MCF 10A (cell line): ENCODE measurements at regions of chr5 and their contacts with region 1.

Region 1: DNA sequence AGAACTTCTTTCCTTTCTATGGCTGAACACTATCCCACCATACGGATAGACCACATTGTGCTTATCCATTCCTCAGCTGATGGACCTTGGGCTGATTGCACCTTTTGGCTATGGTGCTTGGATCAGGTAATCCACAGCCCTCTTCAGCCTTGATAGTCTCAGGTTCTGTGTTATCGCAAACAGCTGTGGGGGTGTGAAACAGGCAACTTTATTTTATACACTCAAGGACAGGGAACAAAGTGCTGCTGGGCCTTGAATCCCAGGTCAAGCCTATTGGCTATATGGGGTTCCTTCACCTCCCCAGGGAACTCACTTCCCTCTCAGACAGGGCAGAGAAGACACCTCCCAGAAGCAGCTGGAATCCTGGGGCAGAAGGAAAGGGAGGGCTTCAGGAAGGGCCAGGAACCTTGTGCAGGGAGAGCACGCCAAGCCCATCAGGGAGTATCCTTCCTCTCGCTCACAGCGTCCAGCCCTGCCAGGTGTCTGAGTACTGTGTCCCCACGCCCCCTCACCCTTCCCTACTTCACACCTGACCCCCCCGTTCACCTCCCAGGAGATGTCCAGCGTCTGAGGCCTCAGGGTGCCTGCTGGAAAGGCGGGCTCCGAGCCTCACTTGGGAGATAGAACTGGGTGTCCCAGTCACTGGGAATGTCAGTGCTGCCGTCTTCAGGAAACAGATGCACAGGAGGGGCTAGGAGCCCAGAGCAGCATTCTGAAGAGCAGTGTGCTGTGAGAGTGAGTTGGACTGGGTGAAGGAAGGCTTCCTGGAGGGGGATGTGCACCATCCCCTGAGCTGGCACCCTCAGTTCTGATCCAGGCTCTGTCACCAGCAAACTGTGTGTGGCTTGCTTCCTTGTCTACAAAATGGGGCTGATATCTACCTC is 32.8 kb downstream of the AFAP1L1 start:
- DNase-seq: no peak
- H3K4me3 Mint-ChIP-seq: no peak overlapping the region
- H3K27ac Mint-ChIP-seq: no peak overlapping the region
- H3K4me1 Mint-ChIP-seq: no peaks in the 10 kb centered on the region
- H3K27me3 Mint-ChIP-seq: no peaks in the 10 kb centered on the region
- CTCF ChIP-seq: no peak

Region 2: GRCh38 chr5:149181732-149182131 is 122.7 kb before region 1 on chr5:
- CTCF ChIA-PET with region 1: no interaction called
- POLR2A ChIA-PET with region 1: no interaction called
- intact Hi-C with region 1: no loop called
- DNase-seq: no peak
- H3K4me3 Mint-ChIP-seq: no peak overlapping the region
- H3K27ac Mint-ChIP-seq: no peak overlapping the region
- H3K4me1 Mint-ChIP-seq: peaks cover 19% of the 10 kb centered on the region
- H3K27me3 Mint-ChIP-seq: no peaks in the 10 kb centered on the region
- CTCF ChIP-seq: no peak

Region 3: GRCh38 chr5:149317281-149318048 is 13.0 kb after region 1 on chr5:
- CTCF ChIA-PET with region 1: interaction called, 21 read pairs
- POLR2A ChIA-PET with region 1: interaction called, 7 read pairs
- intact Hi-C with region 1: no loop called
- DNase-seq: peak; percentile 71
- H3K4me3 Mint-ChIP-seq: no peak overlapping the region
- H3K27ac Mint-ChIP-seq: no peak overlapping the region
- H3K4me1 Mint-ChIP-seq: peaks cover 12% of the 10 kb centered on the region
- H3K27me3 Mint-ChIP-seq: no peaks in the 10 kb centered on the region
- CTCF ChIP-seq: peak; percentile 78

Region 4: DNA sequence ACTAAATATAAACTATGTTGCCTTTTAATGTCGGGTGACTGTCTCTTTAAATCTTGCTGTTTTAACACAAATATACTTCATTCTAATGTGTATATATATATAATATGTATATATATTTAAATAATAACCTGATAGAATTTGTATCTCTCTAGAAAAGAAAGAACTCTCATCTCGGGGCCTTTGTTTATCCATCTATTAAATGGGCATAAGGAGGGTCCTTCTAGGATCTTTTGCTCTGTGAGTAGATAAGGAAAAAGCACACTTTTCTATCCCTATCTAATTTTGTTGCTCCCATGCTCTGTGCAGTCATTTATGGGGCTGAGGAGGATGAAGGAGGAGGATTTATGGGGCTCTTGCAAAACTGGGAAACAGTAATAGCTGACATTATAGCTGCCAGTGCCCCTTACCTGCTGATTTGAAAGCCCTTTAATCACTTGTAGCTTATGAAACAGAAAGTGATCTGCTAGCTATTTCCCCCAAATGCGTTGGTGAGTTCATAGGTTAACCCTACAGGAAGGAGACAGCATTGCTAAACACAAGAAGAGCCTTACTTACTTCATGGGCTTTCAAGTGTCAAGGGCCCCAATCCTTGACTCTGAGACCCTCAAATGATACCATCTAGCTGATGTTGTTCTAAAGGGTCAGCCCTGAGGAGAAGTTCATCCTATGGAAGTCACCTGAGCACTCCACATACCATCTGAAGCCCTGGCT is 419.8 kb after region 1 on chr5:
- CTCF ChIA-PET with region 1: no interaction called
- POLR2A ChIA-PET with region 1: no interaction called
- intact Hi-C with region 1: no loop called
- DNase-seq: no peak
- H3K4me3 Mint-ChIP-seq: no peak overlapping the region
- H3K27ac Mint-ChIP-seq: no peak overlapping the region
- H3K4me1 Mint-ChIP-seq: peaks cover 10% of the 10 kb centered on the region
- H3K27me3 Mint-ChIP-seq: peaks cover 20% of the 10 kb centered on the region
- CTCF ChIP-seq: no peak